ENCODE measurements at regions of chr4 and their contacts with region 1.

Region 1: GRCh38 chr4:177047070-177047850 is 254.5 kb upstream of the VEGFC start:
- DNase-seq: peak in 1 of 2 experiments; percentile 54
- H3K4me3 ChIP-seq: no peak overlapping the region
- H3K27ac ChIP-seq: no peak overlapping the region
- H3K4me1 ChIP-seq: no peaks in the 10 kb centered on the region
- H3K27me3 ChIP-seq: no peaks in the 10 kb centered on the region
- CTCF ChIP-seq: peak; percentile 85

Region 2: GRCh38 chr4:176964116-176964691 is 83.1 kb before region 1 on chr4:
- CTCF ChIA-PET with region 1: interaction called, 11 read pairs
- POLR2A ChIA-PET with region 1: no interaction called
- intact Hi-C with region 1: no loop called
- DNase-seq: no peak
- H3K4me3 ChIP-seq: no peak overlapping the region
- H3K27ac ChIP-seq: no peak overlapping the region
- H3K4me1 ChIP-seq: no peaks in the 10 kb centered on the region
- H3K27me3 ChIP-seq: no peaks in the 10 kb centered on the region
- CTCF ChIP-seq: peak; percentile 50; the same call in 1 of the 2 replicates

Region 3: DNA sequence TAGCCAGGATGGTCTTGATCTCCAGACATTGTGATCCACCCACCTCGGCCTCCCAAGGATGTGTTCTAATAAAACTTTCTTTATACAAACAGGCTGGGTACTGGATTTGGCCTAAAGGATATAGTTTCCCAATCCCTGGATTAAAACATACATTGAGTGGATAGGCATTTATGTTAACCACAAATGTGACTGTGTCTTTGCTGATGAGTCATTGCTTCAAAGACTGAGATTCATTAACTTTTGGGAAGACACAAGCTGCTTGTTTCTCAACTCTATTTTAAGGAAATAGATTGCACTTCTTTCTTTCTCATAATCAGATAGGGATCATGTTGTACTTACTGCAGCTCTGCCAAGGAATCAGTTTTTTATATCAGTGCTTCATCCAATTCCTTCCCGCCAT is 526.2 kb after region 1 on chr4:
- CTCF ChIA-PET with region 1: no interaction called
- POLR2A ChIA-PET with region 1: no interaction called
- intact Hi-C with region 1: no loop called
- DNase-seq: peak in 1 of 2 experiments; percentile 73
- H3K4me3 ChIP-seq: no peak overlapping the region
- H3K27ac ChIP-seq: no peak overlapping the region
- H3K4me1 ChIP-seq: 0 out of 2 replicates have a peak, but pooled peaks cover 4% of the 10 kb centered on the region
- H3K27me3 ChIP-seq: no peaks in the 10 kb centered on the region
- CTCF ChIP-seq: no peak

Region 4: DNA sequence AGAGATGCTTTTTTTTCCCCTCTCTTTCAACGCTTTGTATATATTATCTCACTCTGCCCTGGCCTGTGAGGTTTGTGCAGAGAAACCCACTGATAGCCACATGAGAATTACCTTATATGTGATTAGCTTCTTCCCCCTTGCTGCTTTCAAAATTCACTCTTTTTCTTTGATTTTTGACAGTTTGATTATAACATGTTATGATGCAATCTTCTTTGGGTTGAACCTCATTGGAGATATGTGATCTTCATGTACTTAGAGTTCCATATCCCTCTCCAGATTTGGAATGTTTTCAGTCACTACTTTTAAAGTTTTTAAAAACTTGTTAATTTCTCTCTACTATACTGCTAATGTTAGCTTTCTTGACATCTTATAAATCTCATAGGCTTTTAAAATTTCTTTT is 874.5 kb after region 1 on chr4:
- CTCF ChIA-PET with region 1: no interaction called
- POLR2A ChIA-PET with region 1: no interaction called
- intact Hi-C with region 1: no loop called
- DNase-seq: no peak
- H3K4me3 ChIP-seq: no peak overlapping the region
- H3K27ac ChIP-seq: no peak overlapping the region
- H3K4me1 ChIP-seq: no peaks in the 10 kb centered on the region
- H3K27me3 ChIP-seq: no peaks in the 10 kb centered on the region
- CTCF ChIP-seq: no peak

Measured in PC-9 (cell line).